Prostate gland (tissue), 2 donors: ENCODE measurements at regions of chr7 and their contacts with region 1.

Region 1: GRCh38 chr7:106659963-106660861 is 746 bp downstream of the CCDC71L start:
- DNase-seq: peak; percentile 55
- H3K4me3 ChIP-seq: peak overlapping the region; percentile 85 to 88
- H3K27ac ChIP-seq: peak overlapping the region; percentile 94
- H3K4me1 ChIP-seq: no peaks in the 10 kb centered on the region
- H3K27me3 ChIP-seq: no peaks in the 10 kb centered on the region
- CTCF ChIP-seq: peak; percentile 53 to 71 (median 61)
- POLR2A ChIP-seq: peak; percentile 30

Region 2: DNA sequence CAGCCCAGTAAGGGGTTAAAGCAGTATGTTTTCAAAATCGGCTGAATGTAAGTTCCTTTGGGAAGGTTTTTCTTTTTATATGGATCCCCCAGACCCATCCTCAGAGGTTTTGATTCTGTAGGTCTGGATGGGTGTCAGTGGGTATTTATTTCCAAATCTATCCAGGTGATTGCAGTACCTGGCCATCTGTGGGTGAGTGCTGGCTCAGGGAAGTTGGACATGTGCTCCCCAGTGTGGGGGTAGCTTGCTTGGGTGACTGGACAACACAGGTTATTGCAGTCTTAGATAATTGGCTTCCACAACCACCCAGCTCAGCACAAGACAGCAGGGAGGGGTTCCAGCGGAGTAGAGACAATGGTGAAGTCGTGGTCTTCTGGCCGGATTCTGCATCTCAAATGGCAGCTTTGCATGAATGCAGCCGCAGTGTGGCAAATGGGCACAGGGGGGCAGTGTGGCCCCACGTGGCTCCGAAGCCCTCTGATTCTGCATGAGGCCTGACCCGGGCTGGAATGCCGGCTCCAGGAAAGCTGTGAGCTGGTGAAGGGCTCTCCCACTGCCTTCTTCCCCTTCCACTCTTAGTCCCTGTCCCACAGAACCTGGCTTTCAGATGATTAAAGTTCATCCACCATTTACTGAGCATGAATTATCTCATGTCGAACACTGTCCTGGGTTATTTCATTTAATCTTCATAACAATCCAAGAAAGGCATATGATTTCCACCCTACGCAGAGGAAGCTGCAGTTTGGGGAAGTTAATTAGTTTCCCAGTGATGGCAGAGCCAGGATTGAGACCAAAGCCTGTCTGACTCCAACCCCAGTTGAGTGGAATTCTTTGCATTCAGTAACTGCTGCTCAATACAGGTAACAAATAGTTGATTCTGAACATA is 483.6 kb before region 1 on chr7:
- intact Hi-C with region 1: loop called (anchors 2 kb)
- DNase-seq: peak; percentile 80
- H3K4me3 ChIP-seq: no peak overlapping the region
- H3K27ac ChIP-seq: peak overlapping the region in 1 of 2 donors; percentile 14
- H3K4me1 ChIP-seq: peaks cover 19% of the 10 kb centered on the region
- H3K27me3 ChIP-seq: no peaks in the 10 kb centered on the region
- CTCF ChIP-seq: peak; percentile 84 to 96 (median 93)
- POLR2A ChIP-seq: no peak

Region 3: DNA sequence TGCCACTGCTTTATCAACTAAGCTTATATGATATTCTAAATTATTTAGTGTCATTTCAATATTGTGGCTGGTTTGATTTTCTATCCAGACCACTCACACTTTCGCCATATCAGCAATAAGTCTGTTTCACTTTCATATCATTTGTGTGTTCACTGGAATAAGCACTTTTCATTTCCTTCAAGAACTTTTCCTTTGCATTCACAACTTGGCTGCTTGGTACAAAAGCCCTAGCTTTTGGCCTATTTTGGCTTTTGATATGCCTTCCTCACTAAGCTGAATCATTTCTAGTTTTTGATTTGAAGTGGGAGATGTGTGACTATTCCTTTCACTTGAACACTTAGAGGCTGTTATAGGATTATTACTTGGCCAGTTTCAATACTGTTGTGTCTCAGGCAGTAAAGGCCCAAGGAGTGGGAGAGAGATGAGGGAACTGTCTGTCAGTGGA is 254.5 kb before region 1 on chr7:
- intact Hi-C with region 1: no loop called
- DNase-seq: no peak
- H3K4me3 ChIP-seq: no peak overlapping the region
- H3K27ac ChIP-seq: no peak overlapping the region
- H3K4me1 ChIP-seq: no peaks in the 10 kb centered on the region
- H3K27me3 ChIP-seq: no peaks in the 10 kb centered on the region
- CTCF ChIP-seq: no peak
- POLR2A ChIP-seq: no peak

Region 4: DNA sequence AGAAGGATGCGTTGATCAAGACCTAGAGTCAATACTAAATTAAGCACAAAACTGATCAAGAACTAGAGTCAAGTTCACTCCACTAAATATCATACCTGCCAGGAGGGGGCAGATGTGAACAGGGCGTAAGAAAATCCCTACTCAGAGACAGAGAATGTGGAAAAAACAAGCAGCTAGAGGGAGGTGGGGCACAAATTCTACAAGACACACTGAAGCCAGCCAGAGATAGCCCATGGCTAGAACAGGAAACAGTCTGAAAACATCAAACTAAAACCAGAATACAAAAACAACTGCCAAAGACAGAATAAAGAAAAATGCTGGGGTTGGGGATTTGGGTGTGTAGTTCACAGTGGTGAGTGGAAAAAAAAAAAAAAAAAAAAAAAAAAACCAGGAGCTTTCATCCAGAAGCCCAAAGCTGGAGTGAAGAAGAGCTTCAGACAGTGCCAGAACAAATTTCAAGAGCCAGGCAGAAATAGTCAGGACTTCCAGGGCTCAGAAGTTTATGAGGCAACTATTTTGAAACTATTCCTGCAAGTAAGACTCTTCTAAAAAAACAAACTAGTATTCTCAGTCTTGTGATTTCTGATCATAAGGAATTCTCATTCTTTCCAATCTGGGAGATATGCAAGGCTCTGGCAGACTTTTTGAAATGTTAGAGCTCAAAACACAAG is 117.5 kb before region 1 on chr7:
- intact Hi-C with region 1: loop called (anchors 5 kb)
- DNase-seq: peak; percentile 31
- H3K4me3 ChIP-seq: no peak overlapping the region
- H3K27ac ChIP-seq: peak overlapping the region; percentile 24 to 25
- H3K4me1 ChIP-seq: no peaks in the 10 kb centered on the region
- H3K27me3 ChIP-seq: no peaks in the 10 kb centered on the region
- CTCF ChIP-seq: peak; percentile 13 to 69 (median 58)
- POLR2A ChIP-seq: no peak

Region 5: DNA sequence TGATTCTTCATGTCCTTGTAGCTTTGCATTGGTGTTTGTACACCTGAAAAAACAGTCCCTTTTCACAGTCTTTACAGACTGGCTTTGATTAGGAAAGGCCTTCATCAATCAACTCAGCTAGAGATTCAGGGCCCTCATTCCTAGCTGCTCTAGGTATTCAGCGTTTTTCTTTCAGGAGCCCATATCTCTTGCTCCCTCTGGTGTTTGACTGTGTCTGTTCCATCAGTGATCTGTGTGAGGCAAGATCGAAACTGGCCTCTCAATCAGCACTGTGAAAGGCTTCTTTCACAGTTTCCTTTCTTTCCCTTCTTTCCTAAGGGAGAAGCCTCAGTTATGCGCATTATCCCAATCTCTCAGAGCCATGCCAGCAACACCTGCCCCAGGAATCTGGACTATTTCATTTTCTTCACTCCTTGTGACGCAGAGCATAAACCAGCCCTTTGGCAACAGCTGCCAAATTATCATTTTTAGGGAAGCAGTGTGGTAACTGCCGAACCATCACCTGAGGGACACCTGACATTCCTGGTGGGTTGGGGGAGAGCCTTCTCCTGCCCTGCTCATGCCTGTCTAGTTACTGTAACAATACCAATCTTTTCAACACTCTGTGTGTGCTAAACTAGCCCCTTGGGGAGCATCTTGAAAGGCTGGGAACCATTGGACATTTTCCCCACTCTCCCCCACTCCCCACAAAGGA is 76.4 kb after region 1 on chr7:
- intact Hi-C with region 1: loop called (anchors 2 kb)
- DNase-seq: peak; percentile 23
- H3K4me3 ChIP-seq: no peak overlapping the region
- H3K27ac ChIP-seq: no peak overlapping the region
- H3K4me1 ChIP-seq: no peaks in the 10 kb centered on the region
- H3K27me3 ChIP-seq: no peaks in the 10 kb centered on the region
- CTCF ChIP-seq: peak in 3 of 4 experiments; percentile 53 to 74 (median 64)
- POLR2A ChIP-seq: no peak

Region 6: DNA sequence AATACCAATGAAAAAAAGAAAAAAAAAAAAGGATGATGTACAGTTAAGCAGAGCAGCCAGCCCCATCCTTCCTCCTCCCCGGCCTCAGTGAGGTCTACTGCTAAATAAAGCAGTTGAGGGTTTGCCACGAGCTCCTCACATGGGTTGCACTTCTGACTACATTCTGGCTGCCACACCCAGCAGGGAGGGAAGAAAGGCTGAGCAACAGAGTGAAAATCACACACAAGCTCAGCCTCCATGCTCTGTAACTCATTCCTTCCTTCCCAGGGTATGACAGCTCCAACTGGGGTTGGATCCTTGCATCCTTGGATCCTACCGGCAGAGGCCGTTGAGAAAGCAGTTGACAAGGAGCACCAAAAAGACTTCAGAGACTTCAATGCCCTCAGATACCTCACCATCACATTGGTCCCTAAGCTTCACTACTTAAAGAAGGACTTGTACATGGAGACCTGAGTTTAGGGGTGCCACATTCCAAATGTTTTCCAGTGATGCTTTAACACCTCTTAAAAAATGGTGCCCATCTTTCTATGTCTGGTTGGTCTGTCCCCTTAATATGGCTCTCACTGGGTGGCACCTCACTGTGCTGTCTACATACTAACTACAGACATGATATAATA is 151.9 kb after region 1 on chr7:
- intact Hi-C with region 1: no loop called
- DNase-seq: no peak
- H3K4me3 ChIP-seq: no peak overlapping the region
- H3K27ac ChIP-seq: no peak overlapping the region
- H3K4me1 ChIP-seq: no peaks in the 10 kb centered on the region
- H3K27me3 ChIP-seq: no peaks in the 10 kb centered on the region
- CTCF ChIP-seq: no peak
- POLR2A ChIP-seq: no peak

Region 7: GRCh38 chr7:107150375-107151073 is 490.3 kb after region 1 on chr7:
- intact Hi-C with region 1: loop called (anchors 5 kb)
- DNase-seq: peak; percentile 60
- H3K4me3 ChIP-seq: no peak overlapping the region
- H3K27ac ChIP-seq: no peak overlapping the region
- H3K4me1 ChIP-seq: no peaks in the 10 kb centered on the region
- H3K27me3 ChIP-seq: no peaks in the 10 kb centered on the region
- CTCF ChIP-seq: peak; percentile 36 to 78 (median 70)
- POLR2A ChIP-seq: no peak